Astrocyte of the cerebellum (primary cell): ENCODE measurements at regions of chr7 and their contacts with region 1.

Region 1: GRCh38 chr7:134695321-134695860 is 48.7 kb downstream of the BPGM start:
- DNase-seq: no peak
- H3K4me3 ChIP-seq: no peak overlapping the region
- CTCF ChIP-seq: no peak

Region 2: DNA sequence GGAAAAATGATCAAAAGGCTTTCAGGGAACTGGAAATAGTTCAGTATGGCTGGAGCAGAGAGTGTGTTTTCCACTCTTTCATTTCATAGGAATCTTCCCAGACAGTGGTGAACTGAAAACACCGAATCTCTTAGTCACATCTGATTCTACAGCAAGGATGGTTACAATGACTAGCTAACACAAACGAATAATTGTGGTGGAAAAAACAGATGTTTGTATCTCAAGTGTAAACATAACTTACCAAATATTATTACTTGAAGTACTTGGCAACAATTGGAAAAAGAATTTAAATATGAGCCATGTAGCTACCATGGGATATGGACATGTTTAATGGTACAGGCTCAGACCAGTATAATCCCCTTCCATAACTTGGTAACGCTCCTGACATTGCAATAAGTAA is 69.8 kb before region 1 on chr7:
- in situ Hi-C with region 1: loop called (anchors 5 kb)
- DNase-seq: no peak
- H3K4me3 ChIP-seq: no peak overlapping the region
- CTCF ChIP-seq: no peak

Region 3: DNA sequence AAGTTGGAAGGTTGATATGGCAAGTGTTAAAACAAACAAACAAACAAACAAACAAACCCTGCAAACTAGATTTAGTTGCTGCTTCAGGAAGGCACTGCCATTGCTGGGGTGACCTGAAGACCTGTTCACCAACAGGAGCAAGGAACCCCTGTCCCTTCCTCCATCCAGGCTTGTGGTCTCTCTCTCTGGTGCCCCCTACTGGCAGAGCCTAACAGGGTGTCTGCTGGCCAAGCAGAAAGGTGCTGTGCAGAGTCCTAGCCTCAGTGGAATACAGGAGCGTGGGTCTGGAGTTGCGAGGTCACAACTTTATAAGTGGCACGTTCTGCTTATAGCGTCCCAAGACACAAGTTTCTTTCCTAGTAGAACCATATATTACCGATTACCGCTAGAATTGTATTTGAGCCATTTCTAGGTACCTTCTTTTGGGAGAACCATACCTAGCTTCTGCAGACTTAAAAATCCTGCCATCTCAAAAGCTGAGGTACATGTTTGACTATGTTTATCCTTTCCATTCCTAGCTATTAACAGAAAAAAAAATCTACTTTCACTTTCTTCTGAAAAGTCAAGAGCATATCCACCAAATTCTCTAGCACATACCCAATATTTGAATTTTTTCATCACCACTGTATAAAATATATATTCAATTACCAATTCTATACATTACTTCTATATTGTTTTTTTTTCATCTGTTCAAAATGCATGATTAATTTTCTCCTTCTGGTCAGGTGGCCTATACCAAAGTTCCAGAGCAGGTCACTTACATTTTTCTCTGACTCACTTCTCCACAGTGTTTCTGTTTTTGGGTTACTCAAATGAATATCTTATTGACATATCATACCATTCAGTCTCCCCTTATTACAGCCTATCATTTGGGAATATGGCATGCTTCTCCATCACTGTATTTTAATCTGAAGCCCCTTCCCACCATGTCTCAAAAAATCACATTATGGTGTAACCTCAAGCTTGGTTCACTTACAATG is 55.0 kb after region 1 on chr7:
- in situ Hi-C with region 1: loop called (anchors 5 kb)
- DNase-seq: no peak
- H3K4me3 ChIP-seq: no peak overlapping the region
- CTCF ChIP-seq: peak; percentile 63

Region 4: DNA sequence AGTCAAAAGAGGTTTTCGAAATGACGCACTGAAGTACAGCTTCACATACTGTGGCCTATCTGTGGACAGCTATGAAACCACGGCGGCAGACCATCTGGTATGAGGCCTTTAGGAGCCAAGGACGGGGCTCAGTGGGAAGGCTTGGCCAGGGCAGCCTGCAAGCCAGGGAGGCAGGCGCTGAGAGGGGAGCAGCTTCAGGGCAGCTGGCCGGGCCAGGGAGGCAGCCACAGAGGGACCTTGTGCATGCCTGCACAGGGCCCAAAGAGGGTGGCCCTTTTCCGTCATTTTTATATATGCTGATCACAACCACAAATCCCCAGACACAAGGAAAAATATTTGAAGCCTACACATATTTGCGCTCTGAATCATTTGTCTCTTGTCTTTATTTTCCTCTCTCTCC is 97.6 kb after region 1 on chr7:
- in situ Hi-C with region 1: no loop called
- DNase-seq: no peak
- H3K4me3 ChIP-seq: no peak overlapping the region
- CTCF ChIP-seq: no peak